Activated T-helper 2 cell treated with anti-CD3 and anti-CD28 coated beads, Interferon-gamma antibody, Interleukin-2, Interleukin-4, amounts not matched to agents 10 μg/mL and 5 μg/mL and 100 μg/mL, durations not matched to agents 14 hours and 24 hours and 36 hours (primary cell): ENCODE measurements at regions of chr18 and their contacts with region 1.

Region 1: GRCh38 chr18:3447895-3448837 is 1.8 kb upstream of the TGIF1 start:
- DNase-seq: peak; percentile 84
- H3K4me3 Mint-ChIP-seq: peak overlapping the region; percentile 89
- H3K27ac Mint-ChIP-seq: peak overlapping the region; percentile 97
- H3K4me1 Mint-ChIP-seq: peaks cover 22% of the 10 kb centered on the region
- H3K27me3 Mint-ChIP-seq: no peaks in the 10 kb centered on the region

Region 2: DNA sequence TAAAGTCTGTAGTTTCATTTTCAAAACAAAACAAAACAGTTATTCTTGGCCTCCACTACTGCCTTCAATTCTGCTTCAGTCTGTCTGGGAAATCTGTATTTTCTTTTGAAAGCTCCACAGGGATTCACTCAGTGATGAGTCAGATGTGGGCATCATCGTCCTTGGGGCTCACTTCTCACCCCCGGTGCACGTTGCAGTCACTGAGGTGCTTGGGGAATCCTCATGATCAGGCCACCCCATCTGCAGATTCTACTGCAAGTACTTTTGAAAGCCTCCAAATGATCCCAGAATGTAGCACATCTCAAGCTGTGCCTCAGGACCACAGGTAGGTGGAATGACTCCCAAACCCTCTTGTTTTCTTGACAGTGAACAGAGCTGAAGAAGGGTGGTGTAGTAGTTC is 469.5 kb before region 1 on chr18:
- intact Hi-C with region 1: loop called (anchors 5 kb)
- DNase-seq: no peak
- H3K4me3 Mint-ChIP-seq: peak overlapping the region; percentile 75
- H3K27ac Mint-ChIP-seq: peak overlapping the region; percentile 91
- H3K4me1 Mint-ChIP-seq: peaks cover 74% of the 10 kb centered on the region
- H3K27me3 Mint-ChIP-seq: no peaks in the 10 kb centered on the region

Region 3: DNA sequence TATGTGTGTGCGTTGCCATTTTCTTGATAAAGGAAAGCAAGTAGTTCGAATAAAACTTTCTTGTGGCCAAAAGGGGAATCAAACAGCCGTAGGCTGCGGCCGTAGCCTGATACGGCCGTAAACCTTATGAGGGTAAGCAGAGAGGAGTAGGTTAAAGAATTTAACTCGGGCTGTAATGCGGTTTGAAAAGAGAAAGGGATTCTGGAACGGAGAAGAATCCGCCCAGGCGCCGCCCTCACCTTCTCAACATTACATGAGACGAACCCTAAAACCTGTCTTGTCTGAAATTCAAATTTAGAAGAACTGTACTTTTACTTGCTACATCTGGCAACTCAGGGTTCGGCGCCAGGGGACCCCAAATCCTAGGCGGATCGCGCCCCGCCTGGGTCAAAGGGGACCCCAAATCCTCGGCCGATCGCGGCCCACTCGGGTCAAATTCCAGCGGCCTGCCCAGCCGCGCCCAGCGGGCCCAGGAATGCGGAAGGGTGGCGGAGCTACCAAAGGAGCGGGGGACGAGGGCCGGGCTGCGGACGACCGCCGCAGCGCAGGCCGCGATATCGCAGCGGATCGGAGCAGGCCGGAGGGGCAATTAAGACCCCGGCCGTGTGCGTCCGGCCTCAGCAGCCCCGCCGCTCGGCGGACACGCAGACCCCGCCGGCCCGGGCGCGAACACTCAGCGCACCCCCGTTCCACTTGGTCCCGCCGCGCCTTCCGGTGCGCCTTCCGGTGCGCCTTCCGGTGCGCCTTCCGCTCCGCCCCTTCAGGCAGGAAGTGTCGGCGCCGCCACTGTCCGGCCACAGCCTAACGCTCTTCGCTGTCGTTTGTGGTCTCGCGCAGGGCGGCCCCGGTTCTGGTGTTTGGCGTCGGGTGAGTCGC is 186.6 kb before region 1 on chr18 and contains the start of gene MYL12B:
- intact Hi-C with region 1: loop called (anchors 2 kb)
- DNase-seq: peak; percentile 77
- H3K4me3 Mint-ChIP-seq: peak within 1 kb of the TSS; percentile 97
- H3K27ac Mint-ChIP-seq: peak within 1 kb of the TSS; percentile 99
- H3K4me1 Mint-ChIP-seq: peaks cover 69% of the 10 kb centered on the region
- H3K27me3 Mint-ChIP-seq: no peaks in the 10 kb centered on the region
- total RNA-seq, gene MYL12B: 243 and 245 TPM in 2 replicates

Region 4: DNA sequence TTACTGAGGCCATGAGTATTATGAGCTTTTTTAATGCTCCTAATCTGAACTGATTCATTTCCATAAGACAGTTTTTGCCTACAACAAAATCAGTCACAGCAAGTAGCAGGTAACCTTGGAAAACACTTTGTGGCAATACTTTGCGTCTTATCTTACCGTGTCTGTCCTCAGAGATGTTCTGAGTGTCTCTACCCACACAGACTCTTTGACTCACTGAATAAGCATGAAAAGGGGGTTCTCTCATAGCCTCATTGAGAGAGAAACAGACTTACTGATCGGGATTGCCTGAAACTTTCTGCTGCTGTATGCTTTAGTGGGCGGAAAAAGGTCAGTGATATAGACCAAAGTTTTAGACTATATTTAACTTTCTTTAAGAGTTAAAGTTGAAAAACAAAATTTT is 93.7 kb before region 1 on chr18:
- intact Hi-C with region 1: loop called (anchors 1 kb)
- DNase-seq: no peak
- H3K4me3 Mint-ChIP-seq: no peak overlapping the region
- H3K27ac Mint-ChIP-seq: peak overlapping the region; percentile 83
- H3K4me1 Mint-ChIP-seq: peaks cover 35% of the 10 kb centered on the region
- H3K27me3 Mint-ChIP-seq: no peaks in the 10 kb centered on the region

Region 5: GRCh38 chr18:3604498-3605408 is 156.6 kb after region 1 on chr18:
- intact Hi-C with region 1: loop called (anchors 1 kb)
- DNase-seq: no peak
- H3K4me3 Mint-ChIP-seq: no peak overlapping the region
- H3K27ac Mint-ChIP-seq: no peak overlapping the region
- H3K4me1 Mint-ChIP-seq: peaks cover 16% of the 10 kb centered on the region
- H3K27me3 Mint-ChIP-seq: no peaks in the 10 kb centered on the region